AG04450 (cell line): ENCODE measurements at regions of chr11 and their contacts with region 1.

Region 1: GRCh38 chr11:111707039-111707690 is 59.0 kb downstream of the PPP2R1B start:
- DNase-seq: peak; percentile 74
- H3K4me3 ChIP-seq: no peak overlapping the region
- H3K27ac ChIP-seq: no peak overlapping the region
- H3K27me3 ChIP-seq: no peaks in the 10 kb centered on the region
- CTCF ChIP-seq: no peak

Region 2: GRCh38 chr11:111367411-111368284 is 339.5 kb before region 1 on chr11:
- CTCF ChIA-PET with region 1: no interaction called
- POLR2A ChIA-PET with region 1: no interaction called
- DNase-seq: no peak
- H3K4me3 ChIP-seq: no peak overlapping the region
- H3K27ac ChIP-seq: no peak overlapping the region
- H3K27me3 ChIP-seq: peaks cover 13% of the 10 kb centered on the region
- CTCF ChIP-seq: no peak

Region 3: GRCh38 chr11:111642542-111642941 is 64.6 kb before region 1 on chr11:
- CTCF ChIA-PET with region 1: no interaction called
- POLR2A ChIA-PET with region 1: interaction called, 13 read pairs
- DNase-seq: no peak
- H3K4me3 ChIP-seq: no peak overlapping the region
- H3K27ac ChIP-seq: no peak overlapping the region
- H3K27me3 ChIP-seq: no peaks in the 10 kb centered on the region
- CTCF ChIP-seq: no peak

Region 4: GRCh38 chr11:111676878-111677585 is 30.1 kb before region 1 on chr11:
- CTCF ChIA-PET with region 1: no interaction called
- POLR2A ChIA-PET with region 1: no interaction called
- DNase-seq: no peak
- H3K4me3 ChIP-seq: no peak overlapping the region
- H3K27ac ChIP-seq: no peak overlapping the region
- H3K27me3 ChIP-seq: no peaks in the 10 kb centered on the region
- CTCF ChIP-seq: no peak